Calu3 (cell line): ENCODE measurements at regions of chr20 and their contacts with region 1.

Region 1: GRCh38 chr20:14189794-14190402 is 147.5 kb downstream of the FLRT3 start:
- DNase-seq: peak; percentile 12
- H3K4me3 Mint-ChIP-seq: no peak overlapping the region
- H3K27ac Mint-ChIP-seq: no peak overlapping the region
- H3K4me1 Mint-ChIP-seq: no peaks in the 10 kb centered on the region
- H3K27me3 Mint-ChIP-seq: no peaks in the 10 kb centered on the region
- CTCF ChIP-seq: no peak

Region 2: GRCh38 chr20:14264869-14265268 is 75.0 kb after region 1 on chr20:
- CTCF ChIA-PET with region 1: interaction called, 5 read pairs
- intact Hi-C with region 1: loop called (anchors 1 kb)
- DNase-seq: no peak
- H3K4me3 Mint-ChIP-seq: no peak overlapping the region
- H3K27ac Mint-ChIP-seq: no peak overlapping the region
- H3K4me1 Mint-ChIP-seq: no peaks in the 10 kb centered on the region
- H3K27me3 Mint-ChIP-seq: no peaks in the 10 kb centered on the region
- CTCF ChIP-seq: no peak

Region 3: GRCh38 chr20:14295238-14295637 is 105.3 kb after region 1 on chr20:
- CTCF ChIA-PET with region 1: no interaction called
- intact Hi-C with region 1: no loop called
- DNase-seq: peak; percentile 25
- H3K4me3 Mint-ChIP-seq: no peak overlapping the region
- H3K27ac Mint-ChIP-seq: no peak overlapping the region
- H3K4me1 Mint-ChIP-seq: no peaks in the 10 kb centered on the region
- H3K27me3 Mint-ChIP-seq: no peaks in the 10 kb centered on the region
- CTCF ChIP-seq: no peak

Region 4: DNA sequence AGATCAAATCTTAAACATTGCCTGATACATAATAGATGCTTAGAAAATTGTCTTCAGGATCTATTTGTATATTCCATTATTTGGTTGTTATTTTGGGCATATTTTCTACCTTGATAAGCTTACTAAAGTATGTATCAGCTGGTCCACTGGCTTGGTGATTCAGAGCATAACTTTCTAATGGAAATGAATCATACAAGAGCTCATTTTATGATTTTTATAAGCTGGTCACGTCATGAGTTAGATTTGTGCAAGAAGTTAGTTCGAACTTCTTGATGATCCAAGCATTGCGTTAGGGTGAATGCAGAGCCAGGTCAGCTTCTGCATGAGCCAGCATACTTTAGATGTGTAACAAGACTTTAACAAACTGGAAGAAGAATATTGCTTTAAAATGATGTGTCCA is 292.0 kb after region 1 on chr20:
- CTCF ChIA-PET with region 1: no interaction called
- intact Hi-C with region 1: no loop called
- DNase-seq: no peak
- H3K4me3 Mint-ChIP-seq: no peak overlapping the region
- H3K27ac Mint-ChIP-seq: no peak overlapping the region
- H3K4me1 Mint-ChIP-seq: no peaks in the 10 kb centered on the region
- H3K27me3 Mint-ChIP-seq: no peaks in the 10 kb centered on the region
- CTCF ChIP-seq: no peak